Activated CD4-positive, alpha-beta memory T cell treated with anti-CD3 and anti-CD28 coated beads for 36 hours (primary cell): ENCODE measurements at regions of chr1 and their contacts with region 1.

Region 1: GRCh38 chr1:15741183-15741850 is 982 bp upstream of the TMEM82 start:
- DNase-seq: peak; percentile 85
- H3K4me3 Mint-ChIP-seq: no peak overlapping the region
- H3K27ac Mint-ChIP-seq: no peak overlapping the region
- H3K4me1 Mint-ChIP-seq: peaks cover 5% of the 10 kb centered on the region
- H3K27me3 Mint-ChIP-seq: no peaks in the 10 kb centered on the region

Region 2: GRCh38 chr1:15595809-15596617 is 145.3 kb before region 1 on chr1:
- CTCF ChIA-PET with region 1: interaction called, 9 read pairs
- POLR2A ChIA-PET with region 1: no interaction called
- intact Hi-C with region 1: loop called (anchors 1 kb)
- DNase-seq: no peak
- H3K4me3 Mint-ChIP-seq: no peak overlapping the region
- H3K27ac Mint-ChIP-seq: no peak overlapping the region
- H3K4me1 Mint-ChIP-seq: no peaks in the 10 kb centered on the region
- H3K27me3 Mint-ChIP-seq: peaks cover 1% of the 10 kb centered on the region

Region 3: DNA sequence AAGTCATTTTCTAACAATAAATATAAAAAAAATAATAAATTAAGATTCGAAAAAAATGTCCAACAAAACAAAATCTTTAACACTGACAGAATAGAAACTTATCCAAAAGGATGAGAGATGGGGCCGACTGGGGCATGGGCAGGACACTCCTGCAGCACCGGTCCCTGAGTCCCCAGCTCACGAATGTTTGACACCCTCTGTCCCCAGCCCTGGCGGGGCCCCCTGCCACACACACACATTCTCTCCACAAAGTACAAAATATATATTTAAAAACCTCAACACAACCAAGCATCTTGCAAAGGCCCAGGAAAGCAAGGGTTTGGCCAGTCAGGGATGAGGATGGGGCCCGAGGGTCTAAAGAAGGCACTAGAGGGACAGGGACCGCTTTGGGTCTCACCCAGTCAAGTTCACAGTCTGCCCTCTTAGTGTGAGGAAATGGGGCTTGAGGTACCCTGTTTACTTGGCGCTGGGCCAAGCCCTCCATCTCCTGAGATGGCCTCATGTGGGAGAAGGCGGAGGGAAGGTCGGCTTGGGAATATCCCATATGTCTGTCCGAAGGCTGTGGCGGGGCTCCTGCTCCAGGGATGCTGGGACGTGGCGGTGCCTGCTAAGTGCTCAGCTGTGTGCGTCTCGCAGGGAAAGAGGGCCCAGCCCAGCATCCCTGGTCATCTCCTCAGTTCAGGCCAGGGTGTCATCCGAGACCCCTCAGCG is 383.2 kb after region 1 on chr1:
- CTCF ChIA-PET with region 1: no interaction called
- POLR2A ChIA-PET with region 1: no interaction called
- intact Hi-C with region 1: no loop called
- DNase-seq: no peak
- H3K4me3 Mint-ChIP-seq: no peak overlapping the region
- H3K27ac Mint-ChIP-seq: no peak overlapping the region
- H3K4me1 Mint-ChIP-seq: peaks cover 10% of the 10 kb centered on the region
- H3K27me3 Mint-ChIP-seq: no peaks in the 10 kb centered on the region